Prostate gland (tissue), 2 donors: ENCODE measurements at regions of chr6 and their contacts with region 1.

Region 1: DNA sequence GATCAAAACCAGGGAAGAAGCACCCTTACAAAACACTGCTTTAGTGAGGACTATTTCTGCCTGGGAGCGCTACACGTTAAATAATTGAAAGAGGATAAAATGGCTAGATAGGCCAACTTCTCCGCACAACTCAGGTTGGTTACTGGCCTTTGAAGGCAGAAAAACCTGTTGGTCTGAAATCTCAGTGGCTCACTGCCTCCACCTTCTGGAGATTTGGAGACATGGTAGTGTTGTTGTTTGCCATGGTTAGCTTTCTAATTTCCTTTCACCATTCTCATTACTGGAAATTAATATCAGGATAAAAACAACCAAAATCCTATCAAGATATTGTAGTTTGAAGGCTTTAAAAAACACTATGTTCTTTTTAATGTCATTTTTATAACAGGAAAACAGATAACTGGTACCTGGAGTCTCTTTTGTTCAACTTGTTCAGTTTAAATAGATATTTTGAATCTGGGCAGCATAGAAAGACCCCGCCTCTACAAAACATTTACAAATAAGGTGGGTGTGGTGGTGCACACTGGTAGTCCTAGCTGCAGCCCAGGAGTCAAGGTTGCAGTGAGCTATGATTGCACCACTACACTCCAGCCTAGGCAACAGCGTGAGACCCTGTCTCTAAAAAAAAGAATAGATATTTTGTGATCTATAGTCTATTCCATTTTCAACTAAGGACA is 27.5 kb upstream of the BCLAF1 start:
- DNase-seq: peak; percentile 67
- H3K4me3 ChIP-seq: no peak overlapping the region
- H3K27ac ChIP-seq: peak overlapping the region; percentile 27 to 38
- H3K4me1 ChIP-seq: no peaks in the 10 kb centered on the region
- H3K27me3 ChIP-seq: no peaks in the 10 kb centered on the region
- CTCF ChIP-seq: peak; percentile 53 to 91 (median 80)
- POLR2A ChIP-seq: no peak

Region 2: GRCh38 chr6:135506270-135506997 is 810.7 kb before region 1 on chr6:
- intact Hi-C with region 1: loop called (anchors 5 kb)
- DNase-seq: peak; percentile 25
- H3K4me3 ChIP-seq: no peak overlapping the region
- H3K27ac ChIP-seq: peak overlapping the region; percentile 10 to 37
- H3K4me1 ChIP-seq: no peaks in the 10 kb centered on the region
- H3K27me3 ChIP-seq: no peaks in the 10 kb centered on the region
- CTCF ChIP-seq: peak; percentile 25 to 77 (median 56)
- POLR2A ChIP-seq: no peak

Region 3: GRCh38 chr6:136249811-136250685 is 67.1 kb before region 1 on chr6 and contains the start of gene MTFR2:
- intact Hi-C with region 1: loop called (anchors 10 kb)
- DNase-seq: peak; percentile 97
- H3K4me3 ChIP-seq: peak within 1 kb of the TSS; percentile 39 to 43
- H3K27ac ChIP-seq: peak within 1 kb of the TSS; percentile 31 to 36
- H3K4me1 ChIP-seq: no peaks in the 10 kb centered on the region
- H3K27me3 ChIP-seq: no peaks in the 10 kb centered on the region
- CTCF ChIP-seq: no peak
- POLR2A ChIP-seq: peak; percentile 30
- total RNA-seq, gene MTFR2: 1.1 to 2.9 TPM

Region 4: DNA sequence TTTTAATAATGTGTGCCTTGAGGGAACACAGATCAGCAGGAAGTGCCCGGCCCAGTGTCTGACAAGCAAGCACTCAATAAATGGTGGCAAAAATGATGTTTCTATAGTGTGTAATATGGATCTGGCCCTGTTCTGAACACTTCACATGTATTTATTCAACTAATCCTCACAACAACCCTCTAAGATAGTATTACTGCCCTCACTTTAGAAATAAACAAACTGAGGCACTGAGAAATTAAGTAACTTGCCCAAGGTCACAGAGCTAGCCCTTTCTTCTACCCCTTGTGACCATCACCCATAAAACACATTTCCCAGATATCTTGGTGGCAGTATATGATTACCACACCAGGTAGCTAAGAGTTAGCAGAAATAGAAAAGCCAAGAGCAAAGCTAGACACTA is 54.2 kb before region 1 on chr6:
- intact Hi-C with region 1: no loop called
- DNase-seq: no peak
- H3K4me3 ChIP-seq: no peak overlapping the region
- H3K27ac ChIP-seq: no peak overlapping the region
- H3K4me1 ChIP-seq: no peaks in the 10 kb centered on the region
- H3K27me3 ChIP-seq: no peaks in the 10 kb centered on the region
- CTCF ChIP-seq: no peak
- POLR2A ChIP-seq: no peak